Cardiac septum (tissue), 1 donor: ENCODE measurements at regions of chr11 and their contacts with region 1.

Region 1: GRCh38 chr11:131674051-131674755 is 303.8 kb downstream of the NTM start:
- DNase-seq: peak; percentile 84

Region 2: DNA sequence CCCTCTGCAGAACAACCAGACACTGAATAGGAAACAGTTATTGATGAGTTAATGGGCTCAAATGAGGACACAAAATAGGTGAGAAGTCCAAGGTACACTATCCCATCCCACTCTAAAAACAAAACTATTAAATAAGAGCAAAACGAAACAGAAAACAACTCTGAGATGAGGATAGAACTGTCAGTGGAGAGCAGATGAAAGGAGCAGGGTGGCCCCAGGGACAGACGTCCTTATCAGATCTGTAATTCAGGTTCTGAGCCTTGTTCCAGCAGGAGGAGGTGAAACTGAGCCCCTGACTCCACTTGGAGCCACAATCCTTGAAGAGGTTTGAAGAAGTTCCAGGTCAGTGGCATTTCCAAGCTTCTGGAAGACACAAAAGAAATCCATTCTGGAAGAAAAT is 749.4 kb before region 1 on chr11:
- intact Hi-C with region 1: loop called (anchors 5 kb)
- DNase-seq: no peak

Region 3: GRCh38 chr11:131064373-131064991 is 609.7 kb before region 1 on chr11:
- intact Hi-C with region 1: loop called (anchors 5 kb)
- DNase-seq: no peak

Region 4: DNA sequence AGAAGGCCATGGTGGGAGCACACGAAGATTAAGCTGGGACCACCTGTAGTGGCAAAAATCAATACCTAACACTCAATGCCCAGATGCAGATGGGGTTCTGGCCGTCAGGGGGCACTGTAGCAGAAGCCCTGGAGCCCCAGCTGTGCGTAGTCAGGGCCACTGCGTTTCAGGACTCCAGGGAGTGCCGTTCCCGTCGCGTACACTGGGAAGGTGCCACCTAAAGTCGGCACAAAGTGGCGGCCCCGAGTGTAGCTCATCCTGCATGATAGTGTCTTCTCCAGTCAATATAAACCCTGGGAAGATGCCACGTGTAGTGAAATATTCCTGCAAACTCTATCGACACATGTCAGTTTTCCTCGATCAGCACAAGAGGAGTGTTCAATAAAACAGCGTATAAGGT is 427.5 kb before region 1 on chr11:
- intact Hi-C with region 1: loop called (anchors 5 kb)
- DNase-seq: no peak

Region 5: GRCh38 chr11:131579932-131580387 is 94.2 kb before region 1 on chr11:
- intact Hi-C with region 1: loop called (anchors 2 kb)
- DNase-seq: no peak